Astrocyte of the cerebellum (primary cell): ENCODE measurements at regions of chr7 and their contacts with region 1.

Region 1: DNA sequence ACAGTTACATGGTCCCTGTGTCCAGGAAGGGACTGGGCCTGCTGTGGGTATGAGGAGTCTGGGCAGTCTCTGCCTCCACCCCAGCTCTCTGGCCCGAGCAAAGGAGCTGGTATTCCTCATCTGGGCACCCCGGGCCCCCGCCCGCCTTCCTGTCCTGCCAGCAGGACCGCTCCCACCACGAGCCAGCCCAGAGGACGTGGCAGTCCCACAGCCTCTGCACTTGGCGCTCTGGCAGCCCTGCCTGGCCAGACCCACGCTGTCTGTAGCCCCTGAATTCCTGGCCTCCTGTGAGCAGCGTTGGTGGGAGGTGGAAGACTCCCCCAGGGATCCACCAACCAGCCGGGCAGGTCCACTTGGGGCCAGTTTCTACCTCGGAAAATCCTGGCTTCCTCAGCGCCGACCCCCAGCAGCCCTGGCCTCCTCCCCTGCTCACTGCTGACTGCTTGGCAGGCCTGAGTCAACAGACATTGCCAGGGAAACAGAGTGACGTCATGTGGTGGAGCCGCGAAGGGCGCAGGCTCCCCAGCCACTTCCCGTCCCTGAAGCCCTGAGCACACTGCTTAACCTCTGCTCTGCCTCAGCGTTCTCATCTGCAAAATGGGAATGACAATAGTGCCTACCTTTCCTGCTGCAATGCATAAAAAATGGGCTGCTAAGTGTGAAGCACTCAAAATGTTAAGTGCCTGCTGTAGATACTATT is 21.6 kb upstream of the LIMK1 start:
- DNase-seq: peak; percentile 87
- H3K4me3 ChIP-seq: no peak overlapping the region
- CTCF ChIP-seq: no peak

Region 2: DNA sequence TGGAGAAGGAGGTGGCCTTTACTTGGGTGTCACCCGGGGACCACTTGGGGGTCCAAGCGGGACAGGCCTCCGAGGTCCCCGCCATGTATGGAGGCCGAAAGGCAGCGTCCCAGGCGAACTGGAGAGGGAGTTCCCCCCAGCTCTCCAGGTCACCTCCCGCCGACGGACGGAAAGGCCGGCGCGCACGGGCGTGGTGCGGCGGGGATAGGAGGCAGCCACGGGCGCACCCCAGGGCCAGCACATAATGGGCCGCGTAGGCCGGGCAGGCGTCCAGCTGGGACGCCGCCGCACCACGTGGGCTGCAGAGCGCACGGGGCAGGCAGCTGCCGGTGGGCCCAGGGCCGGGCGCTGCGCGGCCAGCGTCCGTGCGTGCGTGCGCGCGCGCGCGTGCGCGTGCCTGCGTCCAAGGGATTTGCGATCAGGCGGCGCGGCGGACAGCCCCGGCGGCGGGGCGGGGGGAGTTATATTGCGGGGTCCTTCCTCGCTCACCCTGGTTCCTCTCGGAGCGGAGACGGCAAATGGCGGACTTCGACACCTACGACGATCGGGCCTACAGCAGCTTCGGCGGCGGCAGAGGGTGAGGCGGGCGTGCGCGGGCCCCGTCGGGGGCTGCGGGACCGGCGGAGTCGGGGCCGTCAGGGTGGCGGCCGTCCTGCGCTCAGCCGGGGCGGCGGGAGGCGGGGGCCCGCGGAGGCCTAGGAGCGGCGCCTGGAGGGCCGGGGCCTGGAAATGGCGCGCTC is 112.0 kb after region 1 on chr7 and contains the start of gene EIF4H:
- in situ Hi-C with region 1: loop called (anchors 10 kb)
- DNase-seq: peak; percentile 81
- H3K4me3 ChIP-seq: peak within 1 kb of the TSS; percentile 91
- CTCF ChIP-seq: no peak

Region 3: GRCh38 chr7:74401137-74401859 is 339.3 kb after region 1 on chr7:
- in situ Hi-C with region 1: loop called (anchors 25 kb)
- DNase-seq: peak; percentile 28
- H3K4me3 ChIP-seq: no peak overlapping the region
- CTCF ChIP-seq: peak; percentile 99